ENCODE measurements at regions of chr22 and their contacts with region 1.

Region 1: DNA sequence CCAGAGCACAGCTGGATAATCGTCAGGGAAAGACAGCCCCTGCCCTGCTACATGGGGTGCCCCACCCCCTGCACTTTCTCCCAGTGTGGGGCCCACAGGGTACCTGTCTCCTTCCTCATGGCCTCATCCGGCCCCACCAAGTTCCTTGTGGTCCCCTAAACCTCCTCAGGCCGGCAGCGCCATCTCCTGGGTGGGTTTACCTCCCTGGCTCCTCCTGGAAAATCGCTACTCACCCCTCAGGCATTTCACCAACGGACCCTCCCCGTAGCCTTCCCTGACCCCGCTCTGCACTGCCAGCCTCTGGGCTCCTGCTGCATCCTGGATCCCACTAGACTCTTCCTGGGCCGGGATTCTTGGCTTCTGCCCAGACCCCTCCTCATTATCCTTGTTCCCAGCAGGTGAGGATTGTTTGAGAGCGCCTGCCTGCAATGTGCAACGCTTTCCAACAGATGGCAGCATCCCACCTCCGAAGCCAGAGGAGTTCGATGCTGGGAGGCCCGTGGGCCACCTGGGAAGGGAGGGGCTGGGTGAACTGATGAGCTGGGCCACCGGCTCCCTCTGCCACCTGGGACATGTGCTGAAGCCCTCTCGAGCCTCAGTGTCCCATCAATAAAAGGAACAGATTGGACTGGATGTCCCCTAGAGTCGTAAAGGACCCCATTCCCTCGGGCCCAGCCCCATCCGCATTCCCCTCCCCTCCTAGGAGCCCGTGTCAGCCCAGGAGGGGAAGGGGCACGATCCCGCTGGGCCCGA is 44.2 kb upstream of the TTLL12 start:
- DNase-seq: peak; percentile 80
- ATAC-seq: peak; percentile 73
- H3K4me3 Mint-ChIP-seq: no peak overlapping the region
- H3K27ac Mint-ChIP-seq: peak overlapping the region; percentile 36
- H3K4me1 Mint-ChIP-seq: peaks cover 6% of the 10 kb centered on the region
- H3K27me3 Mint-ChIP-seq: peaks cover 2% of the 10 kb centered on the region

Region 2: GRCh38 chr22:43263645-43264514 is 32.7 kb after region 1 on chr22:
- CTCF ChIA-PET with region 1: interaction called, 14 read pairs
- DNase-seq: peak; percentile 96
- ATAC-seq: peak; percentile 90
- H3K4me3 Mint-ChIP-seq: peak overlapping the region; percentile 68
- H3K27ac Mint-ChIP-seq: peak overlapping the region; percentile 92
- H3K4me1 Mint-ChIP-seq: peaks cover 31% of the 10 kb centered on the region
- H3K27me3 Mint-ChIP-seq: peaks cover 6% of the 10 kb centered on the region

Region 3: DNA sequence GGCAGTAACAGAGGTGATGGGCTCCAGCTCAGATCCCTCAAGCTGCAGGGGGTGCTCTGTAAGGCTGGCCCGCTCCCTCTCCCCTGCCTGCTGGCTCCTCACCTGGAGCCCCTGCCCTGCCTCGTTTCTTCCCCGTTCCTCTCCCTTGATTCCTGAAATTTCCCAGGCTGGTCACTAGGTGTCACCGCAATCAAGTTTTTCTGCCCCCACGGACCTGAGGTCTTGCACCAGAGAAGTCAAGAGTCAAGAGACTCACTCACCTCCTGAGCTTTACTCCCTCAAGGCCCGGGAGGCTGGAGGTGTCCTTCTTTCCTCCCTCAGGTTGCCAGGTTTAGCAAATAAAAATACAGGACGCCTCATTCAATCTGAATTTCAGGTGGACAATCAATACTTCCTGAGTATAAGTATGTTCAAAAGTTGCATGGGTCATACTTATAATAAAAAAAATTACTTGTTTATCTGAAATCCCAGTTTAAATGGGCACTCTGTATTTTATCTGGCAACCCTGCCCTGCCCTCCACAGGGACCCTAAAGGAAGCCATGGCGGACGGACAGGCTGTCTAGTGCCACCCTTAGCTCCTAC is 42.8 kb after region 1 on chr22:
- CTCF ChIA-PET with region 1: interaction called, 50 read pairs
- DNase-seq: peak; percentile 66
- ATAC-seq: peak; percentile 71
- H3K4me3 Mint-ChIP-seq: no peak overlapping the region
- H3K27ac Mint-ChIP-seq: no peak overlapping the region
- H3K4me1 Mint-ChIP-seq: peaks cover 15% of the 10 kb centered on the region
- H3K27me3 Mint-ChIP-seq: peaks cover 4% of the 10 kb centered on the region

Region 4: DNA sequence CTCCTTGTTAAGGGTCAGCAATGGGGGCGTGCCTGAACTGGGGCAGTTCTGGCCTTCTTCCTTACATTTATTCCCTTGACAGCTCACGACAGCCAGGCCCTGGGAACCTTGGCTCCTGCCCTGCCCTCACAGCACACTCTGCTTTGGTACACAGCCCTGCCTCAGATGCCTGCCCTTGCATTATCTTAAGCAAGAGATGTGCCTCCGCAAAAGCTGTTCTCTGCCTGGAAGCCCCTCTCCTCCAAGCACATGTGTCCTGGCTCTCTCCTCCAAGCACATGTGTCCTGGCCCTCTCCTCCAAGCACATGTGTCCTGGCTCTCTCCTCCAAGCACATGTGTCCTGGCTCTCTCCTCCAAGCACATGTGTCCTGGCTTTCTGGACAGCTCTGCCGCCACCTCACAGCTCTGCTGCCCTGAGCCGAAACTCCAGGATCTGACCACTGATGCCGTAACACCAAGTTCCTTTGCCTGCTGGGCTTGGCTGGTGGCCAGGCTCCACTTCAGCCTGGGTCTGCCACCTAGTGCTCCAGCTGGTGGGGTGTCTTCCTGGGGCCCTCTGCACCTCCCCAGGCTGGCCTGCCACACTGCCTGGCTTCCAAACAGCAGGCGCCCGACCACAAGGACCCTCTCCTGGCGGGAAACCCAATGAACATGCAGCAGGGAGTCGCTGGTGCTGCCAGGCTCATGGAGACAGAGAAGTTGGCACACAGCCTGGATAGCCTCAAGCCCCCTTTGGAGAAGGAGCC is 59.0 kb after region 1 on chr22:
- CTCF ChIA-PET with region 1: interaction called, 11 read pairs
- DNase-seq: no peak
- ATAC-seq: no peak
- H3K4me3 Mint-ChIP-seq: no peak overlapping the region
- H3K27ac Mint-ChIP-seq: peak overlapping the region; percentile 39
- H3K4me1 Mint-ChIP-seq: peaks cover 17% of the 10 kb centered on the region
- H3K27me3 Mint-ChIP-seq: no peaks in the 10 kb centered on the region

Region 5: DNA sequence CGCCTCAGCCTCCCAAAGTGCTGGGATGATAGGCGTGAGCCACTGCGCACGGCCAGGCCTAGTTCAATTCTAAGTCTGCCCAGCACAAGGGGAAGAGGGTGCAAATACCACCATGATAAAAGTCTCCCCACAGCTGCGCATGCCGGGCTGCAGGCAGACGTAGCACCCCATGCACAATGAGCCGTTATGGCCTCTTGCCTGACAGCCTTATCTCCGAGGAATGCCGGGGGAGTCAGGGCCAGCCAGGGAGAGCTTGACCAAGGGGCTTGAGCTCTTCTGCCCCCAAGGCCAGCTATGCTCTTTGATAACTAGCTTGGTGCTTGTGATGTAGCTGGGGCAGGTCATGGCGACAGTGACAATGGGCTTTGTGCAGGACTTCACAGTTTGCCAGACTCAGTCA is 125.7 kb after region 1 on chr22:
- CTCF ChIA-PET with region 1: interaction called, 16 read pairs
- DNase-seq: no peak
- ATAC-seq: no peak
- H3K4me3 Mint-ChIP-seq: no peak overlapping the region
- H3K27ac Mint-ChIP-seq: no peak overlapping the region
- H3K4me1 Mint-ChIP-seq: peaks cover 3% of the 10 kb centered on the region
- H3K27me3 Mint-ChIP-seq: peaks cover 28% of the 10 kb centered on the region

Region 6: DNA sequence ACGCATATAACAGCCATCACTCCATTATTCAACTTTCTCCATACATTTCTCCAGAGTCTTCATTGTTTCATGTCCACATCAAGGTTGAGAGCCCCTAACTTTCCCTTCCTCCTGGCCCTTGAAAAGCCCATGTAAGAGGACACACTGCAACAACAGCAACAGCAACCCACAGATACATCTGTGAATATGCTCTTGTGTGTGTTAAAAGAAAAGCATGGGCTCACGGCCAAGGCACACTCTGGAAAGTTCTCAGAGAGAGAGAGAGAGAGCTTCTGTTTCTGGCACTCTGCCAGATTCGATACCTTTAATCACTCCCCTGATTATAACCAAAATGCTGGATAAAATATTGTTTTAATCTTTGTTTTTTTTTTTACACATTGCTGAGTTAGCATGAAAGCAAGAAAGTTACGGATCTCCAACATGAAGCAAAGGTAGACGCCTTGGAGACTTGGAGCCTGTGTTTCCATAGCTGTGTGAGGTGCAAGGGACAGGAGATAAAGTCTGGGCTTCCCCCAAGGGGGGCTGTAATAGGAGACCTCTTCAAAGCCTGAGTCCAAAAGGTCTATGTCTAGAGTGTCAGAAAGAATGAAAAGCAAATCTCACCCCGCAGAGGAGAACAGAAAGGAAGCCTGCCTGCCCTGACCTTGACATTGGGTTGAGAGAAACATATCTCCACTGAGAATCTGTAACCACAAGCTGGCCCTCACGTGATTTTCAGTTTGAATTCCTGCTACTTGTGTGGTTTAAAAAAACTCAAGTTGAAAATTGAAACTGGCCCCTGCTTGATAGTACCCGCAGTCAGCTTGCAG is 147.0 kb after region 1 on chr22:
- CTCF ChIA-PET with region 1: interaction called, 77 read pairs
- DNase-seq: peak; percentile 79
- ATAC-seq: peak; percentile 18
- H3K4me3 Mint-ChIP-seq: peak overlapping the region; percentile 49
- H3K27ac Mint-ChIP-seq: peak overlapping the region; percentile 86
- H3K4me1 Mint-ChIP-seq: peaks cover 63% of the 10 kb centered on the region
- H3K27me3 Mint-ChIP-seq: peaks cover 75% of the 10 kb centered on the region

Region 7: GRCh38 chr22:43385770-43386641 is 154.9 kb after region 1 on chr22:
- CTCF ChIA-PET with region 1: interaction called, 77 read pairs
- DNase-seq: peak; percentile 83
- ATAC-seq: peak; percentile 89
- H3K4me3 Mint-ChIP-seq: no peak overlapping the region
- H3K27ac Mint-ChIP-seq: no peak overlapping the region
- H3K4me1 Mint-ChIP-seq: peaks cover 36% of the 10 kb centered on the region
- H3K27me3 Mint-ChIP-seq: peaks cover 61% of the 10 kb centered on the region